ENCODE measurements at regions of chr17 and their contacts with region 1.

Region 1: GRCh38 chr17:28494445-28495188 is 11.5 kb upstream of the FOXN1 start:
- DNase-seq: peak; percentile 67 to 96
- ATAC-seq: peak; percentile 79 to 93
- H3K4me3 ChIP-seq: no peak overlapping the region
- H3K27ac ChIP-seq: no peak overlapping the region
- H3K4me1 ChIP-seq: 0 out of 3 replicates have a peak, but pooled peaks cover 5% of the 10 kb centered on the region
- CTCF ChIP-seq: peak; percentile 97
- EP300 ChIP-seq: no peak
- POLR2A ChIP-seq: no peak
- RAD21 ChIP-seq: peak; percentile 97 to 98

Region 2: GRCh38 chr17:28318759-28319660 is 175.6 kb before region 1 on chr17 and contains the start of gene TMEM97:
- CTCF ChIA-PET with region 1: no interaction called
- POLR2A ChIA-PET with region 1: no interaction called
- DNase-seq: peak; percentile 98
- ATAC-seq: peak; percentile 97 to 99
- H3K4me3 ChIP-seq: peak within 1 kb of the TSS; percentile 73
- H3K27ac ChIP-seq: peak within 1 kb of the TSS; percentile 76 to 88
- H3K4me1 ChIP-seq: peaks cover 45% of the 10 kb centered on the region
- CTCF ChIP-seq: no peak
- EP300 ChIP-seq: no peak
- POLR2A ChIP-seq: peak; percentile 80
- RAD21 ChIP-seq: no peak; a peak in 3 of 5 replicates
- polyA plus RNA-seq, gene TMEM97: 90.9 and 98.7 TPM in 2 replicates

Region 3: GRCh38 chr17:28426081-28426519 is 68.5 kb before region 1 on chr17:
- CTCF ChIA-PET with region 1: no interaction called
- POLR2A ChIA-PET with region 1: no interaction called
- DNase-seq: peak; percentile 47 to 58
- ATAC-seq: peak; percentile 89 to 99
- H3K4me3 ChIP-seq: no peak overlapping the region
- H3K27ac ChIP-seq: no peak overlapping the region
- H3K4me1 ChIP-seq: no peaks in the 10 kb centered on the region
- CTCF ChIP-seq: no peak
- EP300 ChIP-seq: no peak
- POLR2A ChIP-seq: no peak
- RAD21 ChIP-seq: peak in 1 of 2 experiments; percentile 37; a peak in 2 of 5 replicates

Region 4: DNA sequence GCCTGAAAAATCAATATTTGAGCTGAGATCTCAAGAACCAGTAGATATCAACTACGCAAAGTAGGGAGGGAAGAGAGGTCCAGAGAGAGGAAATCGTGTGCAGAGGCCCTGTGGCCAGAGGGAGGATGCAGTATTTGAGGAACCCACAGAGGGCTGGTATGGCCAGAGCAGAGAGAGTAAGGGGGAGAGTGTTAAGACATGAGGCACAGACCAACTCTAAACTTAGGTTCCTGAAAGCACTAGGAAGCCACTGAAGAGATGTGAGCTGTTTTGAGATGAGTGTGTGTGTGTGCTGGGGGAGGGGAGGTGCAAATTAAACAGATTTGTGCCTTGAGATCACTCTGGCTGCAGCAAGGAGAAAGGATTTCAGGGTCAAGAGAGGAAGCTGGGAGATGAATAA is 10.3 kb before region 1 on chr17:
- CTCF ChIA-PET with region 1: interaction called, 58 read pairs
- POLR2A ChIA-PET with region 1: no interaction called
- DNase-seq: no peak
- ATAC-seq: no peak
- H3K4me3 ChIP-seq: no peak overlapping the region
- H3K27ac ChIP-seq: no peak overlapping the region
- H3K4me1 ChIP-seq: peaks cover 11% of the 10 kb centered on the region
- CTCF ChIP-seq: no peak
- EP300 ChIP-seq: no peak
- POLR2A ChIP-seq: no peak
- RAD21 ChIP-seq: no peak

Region 5: DNA sequence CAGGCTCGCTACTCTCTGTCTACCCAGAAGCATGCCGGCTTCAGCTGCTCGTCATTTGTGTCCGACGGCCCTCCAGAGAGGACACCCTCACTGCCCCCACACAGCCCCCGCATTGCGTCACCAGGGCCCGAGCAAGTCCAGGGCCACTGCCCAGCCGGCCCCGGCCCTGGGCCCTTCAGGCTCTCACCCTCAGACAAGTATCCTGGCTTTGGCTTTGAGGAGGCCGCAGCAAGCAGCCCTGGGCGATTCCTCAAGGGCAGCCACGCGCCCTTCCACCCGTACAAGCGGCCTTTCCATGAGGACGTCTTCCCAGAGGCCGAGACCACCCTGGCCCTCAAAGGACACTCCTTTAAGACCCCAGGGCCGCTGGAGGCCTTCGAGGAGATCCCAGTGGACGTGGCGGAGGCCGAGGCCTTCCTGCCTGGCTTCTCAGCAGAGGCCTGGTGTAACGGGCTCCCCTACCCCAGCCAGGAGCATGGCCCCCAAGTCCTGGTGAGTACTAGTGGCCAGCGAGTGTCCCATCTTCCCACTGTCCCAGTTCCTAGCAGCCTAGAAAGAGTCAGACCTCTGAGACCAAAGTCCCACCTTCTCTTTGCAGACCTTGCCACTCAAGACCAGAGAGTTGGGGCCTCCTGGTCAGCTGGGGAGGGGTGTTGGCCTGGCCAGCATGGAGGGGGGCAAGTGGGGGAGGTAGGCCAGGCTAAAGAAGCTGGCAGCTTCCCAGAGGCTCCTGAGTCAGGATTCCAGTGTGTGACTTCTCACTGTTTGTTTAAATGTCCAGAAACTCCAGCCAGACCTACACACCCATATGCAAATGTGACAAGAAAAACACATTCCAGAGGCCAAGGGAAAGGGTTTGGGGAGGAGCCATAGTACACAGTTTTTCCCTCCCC is 30.1 kb after region 1 on chr17:
- CTCF ChIA-PET with region 1: interaction called, 11 read pairs
- POLR2A ChIA-PET with region 1: no interaction called
- DNase-seq: peak; percentile 56 to 70
- ATAC-seq: peak; percentile 37 to 75; a peak in 3 of 6 replicates
- H3K4me3 ChIP-seq: no peak overlapping the region
- H3K27ac ChIP-seq: peak overlapping the region; percentile 43 to 65
- H3K4me1 ChIP-seq: peaks cover 31% of the 10 kb centered on the region
- CTCF ChIP-seq: no peak
- EP300 ChIP-seq: no peak
- POLR2A ChIP-seq: no peak
- RAD21 ChIP-seq: no peak

Region 6: GRCh38 chr17:28552246-28552999 is 57.8 kb after region 1 on chr17 and contains the start of gene UNC119:
- CTCF ChIA-PET with region 1: interaction called, 188 read pairs
- POLR2A ChIA-PET with region 1: no interaction called
- DNase-seq: peak; percentile 59 to 89
- ATAC-seq: peak; percentile 75 to 91
- H3K4me3 ChIP-seq: peak within 1 kb of the TSS; percentile 97
- H3K27ac ChIP-seq: peak within 1 kb of the TSS; percentile 79 to 90
- H3K4me1 ChIP-seq: peaks cover 11% of the 10 kb centered on the region
- CTCF ChIP-seq: no peak
- EP300 ChIP-seq: no peak
- POLR2A ChIP-seq: peak; percentile 88
- RAD21 ChIP-seq: no peak
- polyA plus RNA-seq, gene UNC119: 50.5 and 53.5 TPM in 2 replicates

Region 7: DNA sequence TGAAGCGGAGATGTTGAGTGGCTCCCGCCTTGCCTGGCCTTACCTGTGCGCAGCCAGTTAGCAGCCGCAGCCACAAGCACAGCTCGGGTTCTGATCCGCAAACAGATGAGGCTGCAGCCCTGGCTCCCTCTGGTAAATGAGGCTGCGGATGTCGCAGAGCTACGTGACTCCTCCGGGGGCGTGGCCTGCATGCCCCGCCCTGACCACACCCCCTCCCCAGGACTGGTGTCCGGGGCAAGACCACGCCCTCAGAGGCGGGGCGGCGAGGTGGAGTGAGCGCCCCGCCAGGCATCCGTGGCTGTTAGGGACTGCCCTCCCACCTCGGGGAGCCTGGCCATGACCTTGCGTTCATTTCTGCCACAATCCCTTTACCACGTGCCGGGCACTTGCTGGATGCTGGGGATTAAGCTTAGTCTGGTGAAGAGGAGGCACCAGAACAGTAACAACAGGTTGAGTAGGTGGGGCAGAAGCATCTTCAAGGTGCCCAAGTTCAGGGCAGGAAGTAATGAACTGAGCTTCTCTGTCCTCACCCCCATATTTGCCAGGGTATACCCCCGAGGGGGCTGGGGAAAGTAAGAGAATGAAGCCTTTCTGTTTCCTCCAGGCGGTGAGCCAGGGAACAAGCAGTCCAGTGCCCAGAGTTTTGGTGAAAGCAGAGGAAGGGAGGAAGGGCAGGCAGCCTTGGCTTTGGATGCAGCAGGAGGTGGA is 82.3 kb after region 1 on chr17 and contains the start of gene ALDOC:
- CTCF ChIA-PET with region 1: interaction called, 11 read pairs
- POLR2A ChIA-PET with region 1: no interaction called
- DNase-seq: peak; percentile 89 to 95
- ATAC-seq: peak; percentile 60 to 90
- H3K4me3 ChIP-seq: no peak within 1 kb of the TSS
- H3K27ac ChIP-seq: peak within 1 kb of the TSS in 1 of 2 experiments; percentile 29; a peak in 1 of 6 replicates
- H3K4me1 ChIP-seq: peaks cover 19% of the 10 kb centered on the region
- CTCF ChIP-seq: no peak
- EP300 ChIP-seq: no peak
- POLR2A ChIP-seq: no peak
- RAD21 ChIP-seq: no peak
- polyA plus RNA-seq, gene ALDOC: 6.3 and 10.1 TPM in 2 replicates

Region 8: GRCh38 chr17:28623696-28624095 is 129.1 kb after region 1 on chr17:
- CTCF ChIA-PET with region 1: interaction called, 10 read pairs
- POLR2A ChIA-PET with region 1: no interaction called
- DNase-seq: no peak
- ATAC-seq: no peak
- H3K4me3 ChIP-seq: no peak overlapping the region
- H3K27ac ChIP-seq: no peak overlapping the region
- H3K4me1 ChIP-seq: no peaks in the 10 kb centered on the region
- CTCF ChIP-seq: no peak
- EP300 ChIP-seq: no peak
- POLR2A ChIP-seq: no peak
- RAD21 ChIP-seq: no peak

Region 9: DNA sequence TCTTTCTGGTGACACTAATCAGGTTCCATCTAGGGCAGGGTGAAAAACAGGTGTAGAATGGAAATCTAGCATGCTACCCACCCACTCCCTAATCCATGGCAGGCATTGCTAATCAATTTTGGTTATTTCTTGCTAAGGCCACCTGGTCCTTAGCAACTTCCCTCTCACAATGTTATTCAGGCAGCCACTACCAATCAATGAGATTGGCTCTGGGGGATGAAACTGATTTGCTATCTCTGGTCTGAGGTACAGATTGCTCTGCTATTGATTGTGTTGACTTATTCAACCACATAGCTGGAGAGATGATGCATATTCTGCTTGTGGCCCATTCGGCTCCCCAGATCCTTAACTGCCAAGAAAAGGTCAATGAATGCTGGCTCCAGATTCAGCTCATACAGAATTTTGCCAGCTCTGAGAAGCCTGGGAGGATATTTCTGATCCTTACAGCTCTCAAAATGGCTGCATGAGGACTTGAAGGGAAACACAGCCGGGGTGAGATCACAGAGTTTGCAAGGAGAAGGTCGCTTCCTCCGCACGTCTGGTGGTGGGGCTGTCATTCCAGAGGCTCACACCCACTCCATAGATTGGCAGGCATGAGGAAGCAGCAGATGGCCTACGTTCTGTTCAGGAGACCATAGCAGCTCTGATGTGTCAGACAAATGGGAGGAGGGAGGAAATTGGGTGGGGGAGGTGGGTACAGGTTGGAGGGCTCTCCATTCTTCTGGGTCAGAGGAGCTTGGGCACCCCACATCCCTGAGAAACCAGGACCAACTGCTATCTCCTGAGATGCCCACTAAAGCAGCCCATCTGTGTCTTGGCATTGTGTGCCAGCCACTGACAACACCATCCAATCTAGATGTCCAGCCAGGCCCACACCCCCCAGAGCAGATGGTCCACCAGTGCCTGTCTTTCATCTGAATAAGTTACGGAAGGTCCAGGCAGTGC is 488.9 kb after region 1 on chr17:
- CTCF ChIA-PET with region 1: no interaction called
- POLR2A ChIA-PET with region 1: no interaction called
- DNase-seq: no peak
- ATAC-seq: no peak
- H3K4me3 ChIP-seq: no peak overlapping the region
- H3K27ac ChIP-seq: no peak overlapping the region
- H3K4me1 ChIP-seq: no peaks in the 10 kb centered on the region
- CTCF ChIP-seq: no peak
- EP300 ChIP-seq: no peak
- POLR2A ChIP-seq: no peak
- RAD21 ChIP-seq: no peak